ENCODE measurements at regions of chr10 and their contacts with region 1.

Region 1: GRCh38 chr10:103795634-103796274 is 59.6 kb downstream of the SH3PXD2A start:
- DNase-seq: peak; percentile 97
- H3K4me3 ChIP-seq: no peak overlapping the region
- H3K27ac ChIP-seq: peak overlapping the region; percentile 95
- H3K4me1 ChIP-seq: peaks cover 70% of the 10 kb centered on the region
- H3K27me3 ChIP-seq: no peaks in the 10 kb centered on the region
- CTCF ChIP-seq: no peak

Region 2: GRCh38 chr10:103847909-103848468 is 52.2 kb after region 1 on chr10:
- CTCF ChIA-PET with region 1: no interaction called
- POLR2A ChIA-PET with region 1: no interaction called
- intact Hi-C with region 1: loop called (anchors 2 kb)
- DNase-seq: no peak
- H3K4me3 ChIP-seq: no peak overlapping the region
- H3K27ac ChIP-seq: peak overlapping the region; percentile 38
- H3K4me1 ChIP-seq: peaks cover 56% of the 10 kb centered on the region
- H3K27me3 ChIP-seq: no peaks in the 10 kb centered on the region
- CTCF ChIP-seq: peak; percentile 44

Region 3: GRCh38 chr10:103853428-103854264 is 57.9 kb after region 1 on chr10:
- CTCF ChIA-PET with region 1: interaction called, 10 read pairs
- POLR2A ChIA-PET with region 1: no interaction called
- intact Hi-C with region 1: loop called (anchors 2 kb)
- DNase-seq: no peak
- H3K4me3 ChIP-seq: peak overlapping the region; percentile 73
- H3K27ac ChIP-seq: peak overlapping the region; percentile 67
- H3K4me1 ChIP-seq: peaks cover 37% of the 10 kb centered on the region
- H3K27me3 ChIP-seq: no peaks in the 10 kb centered on the region
- CTCF ChIP-seq: no peak

Region 4: DNA sequence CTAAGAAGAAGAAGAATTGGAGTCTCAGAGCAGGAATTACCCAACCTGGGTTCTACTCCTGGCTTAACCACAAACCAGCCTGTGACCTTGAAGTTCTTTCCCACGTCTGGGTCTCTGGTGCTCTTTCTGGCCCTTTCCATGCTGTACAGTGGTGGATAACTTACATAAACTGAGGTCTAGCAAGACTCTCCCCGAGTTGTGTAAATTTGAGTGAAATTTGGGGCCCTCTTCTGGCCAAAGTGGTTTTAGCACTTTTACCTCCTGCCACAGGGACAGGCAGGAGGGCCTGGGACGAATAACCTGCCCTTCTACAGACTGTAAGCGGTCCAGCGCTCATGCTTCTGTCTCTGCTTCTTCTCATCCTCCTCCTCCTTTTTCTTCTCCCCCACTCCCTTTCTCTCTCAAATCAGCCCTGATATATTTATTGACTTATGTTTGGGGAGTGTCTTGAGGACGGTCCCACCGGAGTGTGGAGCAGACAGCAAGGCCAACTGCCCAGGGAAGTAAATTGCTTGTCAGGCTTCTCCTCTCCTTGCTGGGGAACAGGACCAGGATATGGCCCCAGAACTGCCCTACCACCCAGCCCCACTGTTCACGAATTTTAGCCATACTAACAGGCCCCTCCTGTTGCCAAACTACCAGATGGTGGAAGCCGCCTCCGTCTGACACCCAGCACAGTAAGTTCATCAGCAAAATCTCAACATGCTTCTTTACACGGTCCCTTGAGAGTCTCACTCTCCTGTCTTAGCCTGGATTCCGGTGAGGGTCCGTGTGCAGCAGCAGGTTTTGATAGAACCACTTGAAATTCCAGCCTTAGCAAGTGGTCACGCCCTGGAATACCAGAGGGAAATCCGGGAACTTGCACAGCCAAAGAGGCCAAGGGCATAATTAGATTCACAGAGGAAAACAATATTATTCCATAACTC is 63.7 kb after region 1 on chr10:
- CTCF ChIA-PET with region 1: interaction called, 10 read pairs
- POLR2A ChIA-PET with region 1: no interaction called
- intact Hi-C with region 1: no loop called
- DNase-seq: peak; percentile 86
- H3K4me3 ChIP-seq: no peak overlapping the region
- H3K27ac ChIP-seq: no peak overlapping the region
- H3K4me1 ChIP-seq: peaks cover 17% of the 10 kb centered on the region
- H3K27me3 ChIP-seq: no peaks in the 10 kb centered on the region
- CTCF ChIP-seq: peak; percentile 74

Measured in A673 (cell line).